Activated T-helper 2 cell treated with anti-CD3 and anti-CD28 coated beads, Interferon-gamma antibody, Interleukin-2, Interleukin-4, amounts not matched to agents 10 μg/mL and 5 μg/mL and 100 μg/mL, durations not matched to agents 14 hours and 24 hours and 36 hours (primary cell): ENCODE measurements at regions of chr13 and their contacts with region 1.

Region 1: GRCh38 chr13:102870677-102871415 is 25.0 kb downstream of the ERCC5 start:
- DNase-seq: no peak
- H3K4me3 Mint-ChIP-seq: no peak overlapping the region
- H3K27ac Mint-ChIP-seq: peak overlapping the region; percentile 35
- H3K4me1 Mint-ChIP-seq: peaks cover 33% of the 10 kb centered on the region
- H3K27me3 Mint-ChIP-seq: no peaks in the 10 kb centered on the region

Region 2: GRCh38 chr13:102792396-102792795 is 78.5 kb before region 1 on chr13:
- intact Hi-C with region 1: no loop called
- DNase-seq: no peak
- H3K4me3 Mint-ChIP-seq: no peak overlapping the region
- H3K27ac Mint-ChIP-seq: no peak overlapping the region
- H3K4me1 Mint-ChIP-seq: peaks cover 9% of the 10 kb centered on the region
- H3K27me3 Mint-ChIP-seq: no peaks in the 10 kb centered on the region

Region 3: GRCh38 chr13:102915393-102915930 is 44.6 kb after region 1 on chr13:
- intact Hi-C with region 1: loop called (anchors 5 kb)
- DNase-seq: no peak
- H3K4me3 Mint-ChIP-seq: no peak overlapping the region
- H3K27ac Mint-ChIP-seq: no peak overlapping the region
- H3K4me1 Mint-ChIP-seq: no peaks in the 10 kb centered on the region
- H3K27me3 Mint-ChIP-seq: peaks cover 10% of the 10 kb centered on the region